Transverse colon (tissue), 4 donors: ENCODE measurements at regions of chr20 and their contacts with region 1.

Region 1: DNA sequence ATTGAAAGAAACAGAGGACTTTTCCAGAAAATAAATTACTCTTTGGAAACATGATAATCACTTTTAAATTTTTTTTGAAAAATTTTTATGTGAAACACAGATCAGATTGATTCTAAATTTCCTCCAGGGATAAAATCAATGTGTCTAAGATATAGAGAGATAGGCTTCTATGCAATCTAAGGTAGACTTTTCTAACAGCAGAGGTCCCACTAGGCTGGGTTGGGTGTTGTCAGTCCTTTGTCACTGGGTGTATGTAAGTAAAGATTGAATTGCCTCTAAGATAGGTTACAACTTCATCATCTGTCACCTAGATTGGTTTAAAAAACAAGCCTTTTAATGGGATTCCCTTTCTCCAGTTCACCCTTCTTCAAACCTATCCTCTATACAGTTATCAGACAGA is 449.9 kb downstream of the DHX35 start:
- DNase-seq: no peak
- H3K4me3 ChIP-seq: no peak overlapping the region
- H3K27ac ChIP-seq: no peak overlapping the region
- H3K4me1 ChIP-seq: no peaks in the 10 kb centered on the region
- H3K27me3 ChIP-seq: no peaks in the 10 kb centered on the region
- CTCF ChIP-seq: no peak
- EP300 ChIP-seq: no peak
- POLR2A ChIP-seq: no peak

Region 2: DNA sequence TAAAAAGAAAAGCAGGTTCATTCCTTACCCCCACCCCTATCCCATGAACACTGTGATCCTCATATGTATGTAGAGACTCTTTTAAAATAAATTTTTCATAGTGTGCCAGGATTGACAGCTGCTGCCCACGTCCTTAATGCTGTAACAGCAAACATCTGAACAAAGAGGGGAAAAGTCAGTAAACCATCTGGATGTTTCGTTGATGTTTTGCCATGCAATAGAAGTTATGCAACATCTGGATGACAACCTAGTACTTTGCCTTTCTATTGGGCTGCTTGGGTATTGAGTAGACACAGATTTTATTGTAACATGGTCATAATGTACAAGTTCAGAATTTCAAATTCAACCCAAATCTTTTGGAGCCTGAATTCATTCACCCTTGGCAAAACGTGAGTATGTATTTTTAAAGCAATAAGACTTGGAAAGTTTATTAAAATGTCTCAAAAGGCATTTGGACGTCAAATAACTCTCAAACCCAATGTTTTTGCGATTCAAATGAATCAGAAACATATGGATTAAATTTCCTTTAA is 50.4 kb after region 1 on chr20:
- in situ Hi-C with region 1: no loop called
- intact Hi-C with region 1: loop called (anchors 2 kb)
- DNase-seq: no peak
- H3K4me3 ChIP-seq: no peak overlapping the region
- H3K27ac ChIP-seq: no peak overlapping the region
- H3K4me1 ChIP-seq: no peaks in the 10 kb centered on the region
- H3K27me3 ChIP-seq: no peaks in the 10 kb centered on the region
- CTCF ChIP-seq: no peak
- EP300 ChIP-seq: no peak
- POLR2A ChIP-seq: no peak

Region 3: DNA sequence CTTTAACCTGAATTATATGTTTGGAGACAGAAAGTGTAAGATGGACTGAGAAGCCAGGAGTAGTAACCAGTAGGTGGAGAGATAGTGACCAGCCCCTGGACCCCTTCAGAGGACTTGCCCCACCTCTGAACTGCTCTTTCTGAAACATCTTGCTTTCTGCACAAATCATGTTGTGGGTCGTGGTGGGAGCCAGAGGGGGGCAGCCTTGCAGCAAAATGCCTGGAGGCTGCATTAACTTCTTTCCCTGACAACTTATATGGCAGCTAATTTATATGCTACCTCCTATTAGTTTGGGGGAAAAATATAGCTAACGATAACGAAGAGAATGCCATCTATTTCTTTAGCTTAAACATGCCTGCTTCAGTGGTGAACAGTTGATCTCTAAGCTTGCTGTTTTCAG is 417.2 kb after region 1 on chr20:
- in situ Hi-C with region 1: no loop called
- intact Hi-C with region 1: no loop called
- DNase-seq: no peak
- H3K4me3 ChIP-seq: no peak overlapping the region
- H3K27ac ChIP-seq: no peak overlapping the region
- H3K4me1 ChIP-seq: no peaks in the 10 kb centered on the region
- H3K27me3 ChIP-seq: no peaks in the 10 kb centered on the region
- CTCF ChIP-seq: no peak
- EP300 ChIP-seq: no peak
- POLR2A ChIP-seq: no peak